Naive thymus-derived CD4-positive, alpha-beta T cell (primary cell): ENCODE measurements at regions of chr19 and their contacts with region 1.

Region 1: DNA sequence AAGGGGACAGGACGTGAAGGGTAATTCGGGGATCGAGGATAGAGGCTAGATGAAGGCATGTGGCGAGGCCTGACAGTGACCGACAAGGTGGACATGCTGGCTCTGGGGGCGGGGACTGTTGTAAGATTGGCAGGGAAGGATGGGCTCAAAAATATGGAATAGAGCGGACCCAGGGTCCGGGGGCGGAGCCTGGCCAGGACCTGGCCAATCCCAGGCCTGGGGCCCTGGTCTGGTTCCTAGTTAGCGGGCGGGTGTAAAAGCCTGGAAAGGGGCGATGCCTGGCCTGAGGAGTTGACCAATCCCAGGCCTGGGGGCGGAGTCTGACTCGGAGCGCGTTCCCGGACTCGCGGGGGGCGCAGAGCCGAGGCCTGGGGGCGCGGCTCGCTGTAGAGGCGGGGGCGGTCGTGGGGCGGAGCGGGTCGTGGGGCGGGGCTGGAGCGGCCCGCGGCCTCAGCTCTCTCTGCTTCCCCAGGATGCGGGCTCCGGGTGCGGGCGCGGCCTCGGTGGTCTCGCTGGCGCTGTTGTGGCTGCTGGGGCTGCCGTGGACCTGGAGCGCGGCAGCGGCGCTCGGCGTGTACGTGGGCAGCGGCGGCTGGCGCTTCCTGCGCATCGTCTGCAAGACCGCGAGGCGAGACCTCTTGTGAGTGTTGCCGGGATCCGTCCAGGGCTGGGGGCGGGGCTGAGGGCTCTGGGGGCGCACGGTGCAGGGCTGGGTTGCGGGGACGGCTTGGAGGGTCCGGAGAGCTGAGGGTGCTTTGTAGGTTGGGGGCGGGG is at the start of gene SLC27A1:
- DNase-seq: peak; percentile 76 to 90 (median 84)
- ATAC-seq: peak; percentile 84
- H3K4me3 ChIP-seq: peak within 1 kb of the TSS; percentile 96
- H3K4me3 Mint-ChIP-seq: peak within 1 kb of the TSS; percentile 92 to 100 (median 96)
- H3K27ac ChIP-seq: peak within 1 kb of the TSS; percentile 77
- H3K27ac Mint-ChIP-seq: peak within 1 kb of the TSS; percentile 74 to 98 (median 93)
- H3K4me1 ChIP-seq: peaks cover 6 to 22% of the 10 kb centered on the region in 2 donors
- H3K4me1 Mint-ChIP-seq: peaks cover 22 to 38% (median 30%) of the 10 kb centered on the region in 7 donors
- H3K27me3 ChIP-seq: no peaks in the 10 kb centered on the region
- H3K27me3 Mint-ChIP-seq: peaks cover 0 to 22% (median 0%) of the 10 kb centered on the region in 5 donors
- total RNA-seq, gene SLC27A1: 3.1 to 15.1 (median 11.0) TPM

Region 2: DNA sequence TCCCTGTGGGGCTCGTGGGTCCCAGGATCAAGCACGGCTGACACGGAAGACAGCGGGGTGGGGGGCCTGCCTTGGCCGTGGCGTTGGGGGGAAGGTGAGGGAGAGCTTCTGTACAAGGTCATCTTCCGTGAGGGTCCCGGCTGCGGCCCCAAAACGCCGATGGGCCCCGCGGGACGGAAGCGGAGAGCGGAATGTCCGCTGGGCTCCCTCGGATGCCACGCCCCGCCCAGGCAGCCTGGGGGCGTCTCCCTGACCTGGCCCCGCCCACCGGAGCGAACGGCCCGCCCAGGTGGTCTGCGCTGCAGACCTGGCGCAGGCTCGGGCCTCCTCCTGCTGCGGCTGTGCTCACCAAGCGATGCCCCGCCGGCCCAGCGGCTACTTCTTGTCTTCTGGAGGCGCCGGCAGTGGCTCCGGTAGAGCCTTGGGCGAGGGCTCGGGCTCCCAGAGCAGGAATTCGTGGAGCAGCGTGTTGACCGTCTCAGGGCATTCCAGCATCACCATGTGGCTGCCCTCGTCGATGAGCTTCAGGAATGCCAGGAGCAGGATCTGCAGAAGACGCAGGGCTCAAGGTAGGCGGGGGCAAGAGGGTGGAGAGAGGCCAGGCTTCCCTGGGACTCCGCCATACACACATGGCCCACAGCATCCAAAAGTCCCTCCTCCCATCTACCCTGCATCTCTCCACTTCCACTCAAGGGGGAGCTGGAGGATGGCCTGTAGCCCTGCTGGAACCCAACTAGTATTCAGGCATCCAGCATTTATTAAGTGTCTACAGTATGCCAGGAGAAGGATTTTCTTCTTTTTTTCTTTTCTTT is 177.8 kb before region 1 on chr19:
- CTCF ChIA-PET with region 1: interaction called, 3 read pairs
- POLR2A ChIA-PET with region 1: no interaction called
- intact Hi-C with region 1: loop called in 1 of 2 experiments (anchors 1 kb)
- DNase-seq: peak; percentile 71 to 88 (median 79)
- ATAC-seq: peak; percentile 97
- H3K4me3 ChIP-seq: peak overlapping the region; percentile 80
- H3K4me3 Mint-ChIP-seq: peak overlapping the region; percentile 83 to 93 (median 92)
- H3K27ac ChIP-seq: peak overlapping the region; percentile 55
- H3K27ac Mint-ChIP-seq: peak overlapping the region; percentile 33 to 87 (median 77)
- H3K4me1 ChIP-seq: peaks cover 0 to 5% of the 10 kb centered on the region in 2 donors
- H3K4me1 Mint-ChIP-seq: peaks cover 0 to 7% (median 5%) of the 10 kb centered on the region in 7 donors
- H3K27me3 ChIP-seq: no peaks in the 10 kb centered on the region
- H3K27me3 Mint-ChIP-seq: peaks cover 0 to 5% (median 0%) of the 10 kb centered on the region in 5 donors

Region 3: GRCh38 chr19:17390665-17391370 is 79.4 kb before region 1 on chr19:
- CTCF ChIA-PET with region 1: interaction called, 9 read pairs
- POLR2A ChIA-PET with region 1: interaction called, 4 read pairs
- intact Hi-C with region 1: loop called (anchors 1 kb)
- DNase-seq: peak; percentile 77 to 93 (median 85)
- ATAC-seq: peak; percentile 100
- H3K4me3 ChIP-seq: peak overlapping the region; percentile 84
- H3K4me3 Mint-ChIP-seq: peak overlapping the region; percentile 85 to 98 (median 92)
- H3K27ac ChIP-seq: peak overlapping the region; percentile 2
- H3K27ac Mint-ChIP-seq: peak overlapping the region in 5 of 9 donors; percentile 28 to 92 (median 61)
- H3K4me1 ChIP-seq: peaks cover 15 to 18% of the 10 kb centered on the region in 2 donors
- H3K4me1 Mint-ChIP-seq: peaks cover 6 to 30% (median 20%) of the 10 kb centered on the region in 7 donors
- H3K27me3 ChIP-seq: no peaks in the 10 kb centered on the region
- H3K27me3 Mint-ChIP-seq: peaks cover 0 to 28% (median 0%) of the 10 kb centered on the region in 5 donors

Region 4: GRCh38 chr19:17448131-17448967 is 21.9 kb before region 1 on chr19 and contains the start of gene TMEM221:
- CTCF ChIA-PET with region 1: interaction called, 5 read pairs
- POLR2A ChIA-PET with region 1: no interaction called
- intact Hi-C with region 1: loop called (anchors 1 to 2 kb)
- DNase-seq: peak; percentile 37 to 67 (median 50)
- ATAC-seq: peak; percentile 89
- H3K4me3 ChIP-seq: peak within 1 kb of the TSS; percentile 39
- H3K4me3 Mint-ChIP-seq: peak within 1 kb of the TSS in 9 of 10 donors; percentile 16 to 68 (median 58)
- H3K27ac ChIP-seq: no peak within 1 kb of the TSS
- H3K27ac Mint-ChIP-seq: no peak within 1 kb of the TSS
- H3K4me1 ChIP-seq: no peaks in the 10 kb centered on the region
- H3K4me1 Mint-ChIP-seq: peaks cover 0 to 16% (median 10%) of the 10 kb centered on the region in 7 donors
- H3K27me3 ChIP-seq: no peaks in the 10 kb centered on the region
- H3K27me3 Mint-ChIP-seq: peaks cover 2 to 26% (median 8%) of the 10 kb centered on the region in 5 donors
- total RNA-seq, gene TMEM221: not detected

Region 5: GRCh38 chr19:17555480-17555928 is 85.2 kb after region 1 on chr19 and contains the start of gene COLGALT1:
- CTCF ChIA-PET with region 1: no interaction called
- POLR2A ChIA-PET with region 1: no interaction called
- intact Hi-C with region 1: loop called (anchors 1 kb)
- DNase-seq: peak; percentile 92 to 99 (median 96)
- ATAC-seq: peak; percentile 99
- H3K4me3 ChIP-seq: peak within 1 kb of the TSS; percentile 81
- H3K4me3 Mint-ChIP-seq: peak within 1 kb of the TSS; percentile 73 to 90 (median 84)
- H3K27ac ChIP-seq: peak within 1 kb of the TSS; percentile 76
- H3K27ac Mint-ChIP-seq: peak within 1 kb of the TSS in 6 of 9 donors; percentile 36 to 80 (median 66)
- H3K4me1 ChIP-seq: peaks cover 16% of the 10 kb centered on the region in 2 donors
- H3K4me1 Mint-ChIP-seq: peaks cover 8 to 29% (median 20%) of the 10 kb centered on the region in 7 donors
- H3K27me3 ChIP-seq: no peaks in the 10 kb centered on the region
- H3K27me3 Mint-ChIP-seq: no peaks in the 10 kb centered on the region
- total RNA-seq, gene COLGALT1: 50.1 to 70.6 (median 61.3) TPM